Panc1 (cell line): ENCODE measurements at regions of chr7 and their contacts with region 1.

Region 1: GRCh38 chr7:5266191-5267028 is 16.3 kb upstream of the SLC29A4 start:
- DNase-seq: no peak
- ATAC-seq: 0 out of 2 replicates have a peak, but pooled peaks have one; percentile 14
- H3K4me3 ChIP-seq: no peak overlapping the region
- H3K27ac ChIP-seq: no peak overlapping the region
- H3K4me1 ChIP-seq: 0 out of 2 replicates have a peak, but pooled peaks cover 3% of the 10 kb centered on the region
- H3K27me3 ChIP-seq: no peaks in the 10 kb centered on the region
- CTCF ChIP-seq: no peak

Region 2: DNA sequence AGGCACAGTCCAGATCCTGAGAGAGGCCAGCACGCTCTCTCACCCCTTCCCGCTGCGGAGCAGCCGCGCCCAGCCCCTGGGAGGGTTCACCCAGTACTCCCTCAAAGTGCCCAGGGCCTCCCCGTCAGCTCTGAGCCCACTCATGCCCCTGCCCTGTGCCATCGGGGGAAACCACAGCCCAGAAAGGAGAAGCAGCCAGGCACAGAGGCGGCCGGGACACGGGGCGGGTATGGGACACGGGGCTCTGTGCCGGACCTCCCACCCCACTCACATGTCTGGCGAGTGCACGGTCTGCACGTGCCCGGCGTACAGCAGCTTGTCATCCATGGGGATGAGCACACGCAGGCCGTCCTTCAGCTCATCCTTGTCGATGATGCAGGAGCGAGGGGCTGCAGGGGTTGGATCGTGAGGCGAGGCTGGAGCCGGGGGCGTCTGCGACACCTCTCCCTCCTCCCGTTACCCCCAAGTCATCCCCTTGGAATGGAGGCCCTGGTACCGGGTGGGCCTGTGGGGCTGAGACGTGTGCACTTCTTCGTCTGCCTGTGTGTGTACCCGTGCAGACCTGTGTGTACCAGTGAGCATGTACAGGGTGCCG is 54.5 kb after region 1 on chr7:
- CTCF ChIA-PET with region 1: no interaction called
- POLR2A ChIA-PET with region 1: interaction called, 10 read pairs
- in situ Hi-C with region 1: no loop called
- intact Hi-C with region 1: no loop called
- DNase-seq: no peak
- ATAC-seq: 0 out of 2 replicates have a peak, but pooled peaks have one; percentile 4
- H3K4me3 ChIP-seq: no peak overlapping the region
- H3K27ac ChIP-seq: no peak overlapping the region
- H3K4me1 ChIP-seq: no peaks in the 10 kb centered on the region
- H3K27me3 ChIP-seq: no peaks in the 10 kb centered on the region
- CTCF ChIP-seq: no peak